Posterior cingulate gyrus (tissue), 11 donors: ENCODE measurements at regions of chr15 and their contacts with region 1.

Region 1: DNA sequence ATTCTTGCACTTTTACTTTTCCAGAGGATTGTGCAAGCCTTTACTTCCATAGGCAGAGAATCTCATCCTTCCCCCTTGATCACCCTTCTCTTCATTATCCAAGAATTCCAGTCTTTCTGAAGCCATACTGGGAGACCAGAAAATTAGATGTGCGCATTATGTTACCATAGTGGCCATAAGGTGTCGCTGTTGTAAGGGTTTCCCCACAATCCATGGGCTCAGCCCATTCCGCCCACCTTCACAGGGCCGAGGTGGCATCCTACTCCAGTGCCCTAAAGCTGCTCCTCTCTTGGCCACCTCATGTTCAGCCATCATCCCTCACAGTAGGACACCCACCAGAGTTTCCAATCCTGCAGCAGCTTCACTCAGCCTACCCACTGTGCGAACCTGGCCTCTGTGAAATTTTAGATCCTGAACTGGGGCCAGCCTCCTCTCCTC is 35.0 kb downstream of the CTSH start:
- DNase-seq: no peak

Region 2: GRCh38 chr15:78979456-78980320 is 69.9 kb after region 1 on chr15:
- intact Hi-C with region 1: loop called (anchors 10 kb)
- DNase-seq: peak in 8 of 10 donors; percentile 29 to 89 (median 46)